ENCODE measurements at regions of chrX and their contacts with region 1.

Region 1: GRCh38 chrX:38327007-38327774 is at the start of gene RPGR:
- DNase-seq: peak; percentile 91 to 93 (median 91)
- H3K4me3 ChIP-seq: peak within 1 kb of the TSS in 1 of 2 donors; percentile 77
- H3K4me3 Mint-ChIP-seq: peak within 1 kb of the TSS; percentile 92 to 98 (median 95)
- H3K27ac ChIP-seq: peak within 1 kb of the TSS; percentile 86
- H3K27ac Mint-ChIP-seq: peak within 1 kb of the TSS; percentile 96 to 98 (median 97)
- H3K4me1 ChIP-seq: peaks cover 24% of the 10 kb centered on the region
- H3K4me1 Mint-ChIP-seq: peaks cover 17 to 33% (median 24%) of the 10 kb centered on the region in 4 donors
- H3K27me3 ChIP-seq: no peaks in the 10 kb centered on the region
- H3K27me3 Mint-ChIP-seq: no peaks in the 10 kb centered on the region
- total RNA-seq, gene RPGR: 10.2 to 11.7 TPM

Region 2: GRCh38 chrX:37745354-37745753 is 581.8 kb before region 1 on chrX:
- CTCF ChIA-PET with region 1: interaction called, 4 read pairs
- POLR2A ChIA-PET with region 1: no interaction called
- intact Hi-C with region 1: loop called (anchors 10 kb)
- DNase-seq: peak; percentile 67 to 73 (median 71)
- H3K4me3 ChIP-seq: no peak overlapping the region
- H3K4me3 Mint-ChIP-seq: no peak overlapping the region
- H3K27ac ChIP-seq: no peak overlapping the region
- H3K27ac Mint-ChIP-seq: peak overlapping the region in 3 of 7 donors; percentile 4 to 61 (median 29)
- H3K4me1 ChIP-seq: peaks cover 11% of the 10 kb centered on the region
- H3K4me1 Mint-ChIP-seq: peaks cover 7 to 13% (median 11%) of the 10 kb centered on the region in 4 donors
- H3K27me3 ChIP-seq: no peaks in the 10 kb centered on the region
- H3K27me3 Mint-ChIP-seq: no peaks in the 10 kb centered on the region

Region 3: GRCh38 chrX:37846934-37847732 is 480.1 kb before region 1 on chrX and contains the start of gene DYNLT3:
- CTCF ChIA-PET with region 1: no interaction called
- POLR2A ChIA-PET with region 1: interaction called, 3 read pairs
- intact Hi-C with region 1: loop called (anchors 1 kb)
- DNase-seq: peak; percentile 76 to 83 (median 82)
- H3K4me3 ChIP-seq: peak within 1 kb of the TSS; percentile 61 to 66
- H3K4me3 Mint-ChIP-seq: peak within 1 kb of the TSS; percentile 83 to 91 (median 88)
- H3K27ac ChIP-seq: peak within 1 kb of the TSS; percentile 93
- H3K27ac Mint-ChIP-seq: peak within 1 kb of the TSS; percentile 94 to 98 (median 96)
- H3K4me1 ChIP-seq: peaks cover 8% of the 10 kb centered on the region
- H3K4me1 Mint-ChIP-seq: peaks cover 15 to 38% (median 25%) of the 10 kb centered on the region in 4 donors
- H3K27me3 ChIP-seq: no peaks in the 10 kb centered on the region
- H3K27me3 Mint-ChIP-seq: no peaks in the 10 kb centered on the region
- total RNA-seq, gene DYNLT3: 38.5 to 41.5 TPM

Region 4: GRCh38 chrX:37926700-37927099 is 400.5 kb before region 1 on chrX:
- CTCF ChIA-PET with region 1: no interaction called
- POLR2A ChIA-PET with region 1: no interaction called
- intact Hi-C with region 1: loop called (anchors 2 kb)
- DNase-seq: peak in 4 of 5 donors; percentile 11 to 21 (median 16)
- H3K4me3 ChIP-seq: no peak overlapping the region
- H3K4me3 Mint-ChIP-seq: no peak overlapping the region
- H3K27ac ChIP-seq: no peak overlapping the region
- H3K27ac Mint-ChIP-seq: no peak overlapping the region
- H3K4me1 ChIP-seq: no peaks in the 10 kb centered on the region
- H3K4me1 Mint-ChIP-seq: peaks cover 0 to 3% (median 0%) of the 10 kb centered on the region in 4 donors
- H3K27me3 ChIP-seq: no peaks in the 10 kb centered on the region
- H3K27me3 Mint-ChIP-seq: peaks cover 2 to 3% of the 10 kb centered on the region in 2 donors

Region 5: GRCh38 chrX:38192007-38192810 is 135.0 kb before region 1 on chrX:
- CTCF ChIA-PET with region 1: interaction called, 8 read pairs
- POLR2A ChIA-PET with region 1: no interaction called
- intact Hi-C with region 1: loop called (anchors 10 kb)
- DNase-seq: no peak
- H3K4me3 ChIP-seq: no peak overlapping the region
- H3K4me3 Mint-ChIP-seq: no peak overlapping the region
- H3K27ac ChIP-seq: no peak overlapping the region
- H3K27ac Mint-ChIP-seq: no peak overlapping the region
- H3K4me1 ChIP-seq: no peaks in the 10 kb centered on the region
- H3K4me1 Mint-ChIP-seq: no peaks in the 10 kb centered on the region
- H3K27me3 ChIP-seq: no peaks in the 10 kb centered on the region
- H3K27me3 Mint-ChIP-seq: peaks cover 0 to 3% of the 10 kb centered on the region in 2 donors

Region 6: GRCh38 chrX:38382663-38383062 is 55.5 kb after region 1 on chrX:
- CTCF ChIA-PET with region 1: no interaction called
- POLR2A ChIA-PET with region 1: no interaction called
- intact Hi-C with region 1: no loop called
- DNase-seq: no peak
- H3K4me3 ChIP-seq: no peak overlapping the region
- H3K4me3 Mint-ChIP-seq: no peak overlapping the region
- H3K27ac ChIP-seq: no peak overlapping the region
- H3K27ac Mint-ChIP-seq: no peak overlapping the region
- H3K4me1 ChIP-seq: no peaks in the 10 kb centered on the region
- H3K4me1 Mint-ChIP-seq: no peaks in the 10 kb centered on the region
- H3K27me3 ChIP-seq: no peaks in the 10 kb centered on the region
- H3K27me3 Mint-ChIP-seq: peaks cover 1 to 3% of the 10 kb centered on the region in 2 donors

Measured in CD4-positive, alpha-beta memory T cell (primary cell).